ENCODE measurements at regions of chr4 and their contacts with region 1.

Region 1: DNA sequence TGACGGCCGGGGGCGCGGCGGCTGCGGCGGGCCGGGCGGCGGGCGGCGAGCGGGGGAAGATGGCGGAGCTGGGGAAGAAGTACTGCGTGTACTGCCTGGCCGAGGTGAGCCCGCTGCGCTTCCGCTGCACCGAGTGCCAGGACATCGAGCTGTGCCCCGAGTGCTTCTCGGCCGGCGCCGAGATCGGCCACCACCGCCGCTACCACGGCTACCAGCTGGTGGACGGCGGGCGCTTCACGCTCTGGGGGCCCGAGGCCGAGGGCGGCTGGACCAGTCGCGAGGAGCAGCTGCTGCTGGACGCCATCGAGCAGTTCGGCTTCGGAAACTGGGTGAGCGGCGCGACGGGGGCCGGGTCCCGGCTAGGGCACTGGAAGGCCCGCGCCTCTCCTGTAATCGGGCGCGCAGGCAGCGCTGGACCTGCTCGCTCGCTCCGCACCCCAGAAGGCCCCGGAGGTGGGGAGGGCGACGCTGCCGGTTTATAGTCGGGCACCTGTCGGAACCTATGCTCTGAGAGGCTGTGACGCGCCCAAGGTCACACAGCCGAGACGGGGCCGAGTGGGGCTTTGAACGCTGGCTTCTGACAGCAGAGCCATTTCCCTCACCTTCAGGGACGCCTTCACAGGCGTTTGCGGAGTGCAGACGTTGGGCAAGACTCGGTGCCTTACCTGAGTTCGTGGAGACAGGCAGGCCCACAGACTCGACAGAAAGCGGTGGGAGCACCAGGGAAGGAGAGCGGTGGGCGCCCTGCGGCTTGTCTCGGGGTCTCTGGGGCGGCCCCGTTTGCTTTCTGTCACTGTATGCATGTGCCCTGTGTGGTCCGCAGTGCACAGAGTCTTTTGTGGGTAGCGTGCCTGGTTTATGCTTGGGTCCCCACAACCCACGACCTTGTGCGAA is 596 bp downstream of the TADA2B start:
- DNase-seq: peak; percentile 87

Region 2: GRCh38 chr4:6885951-6886557 is 157.7 kb before region 1 on chr4:
- intact Hi-C with region 1: no loop called
- DNase-seq: peak; percentile 92

Region 3: GRCh38 chr4:7002336-7002735 is 41.4 kb before region 1 on chr4:
- intact Hi-C with region 1: loop called in 1 of 2 experiments (anchors 1 kb)
- DNase-seq: no peak

Region 4: DNA sequence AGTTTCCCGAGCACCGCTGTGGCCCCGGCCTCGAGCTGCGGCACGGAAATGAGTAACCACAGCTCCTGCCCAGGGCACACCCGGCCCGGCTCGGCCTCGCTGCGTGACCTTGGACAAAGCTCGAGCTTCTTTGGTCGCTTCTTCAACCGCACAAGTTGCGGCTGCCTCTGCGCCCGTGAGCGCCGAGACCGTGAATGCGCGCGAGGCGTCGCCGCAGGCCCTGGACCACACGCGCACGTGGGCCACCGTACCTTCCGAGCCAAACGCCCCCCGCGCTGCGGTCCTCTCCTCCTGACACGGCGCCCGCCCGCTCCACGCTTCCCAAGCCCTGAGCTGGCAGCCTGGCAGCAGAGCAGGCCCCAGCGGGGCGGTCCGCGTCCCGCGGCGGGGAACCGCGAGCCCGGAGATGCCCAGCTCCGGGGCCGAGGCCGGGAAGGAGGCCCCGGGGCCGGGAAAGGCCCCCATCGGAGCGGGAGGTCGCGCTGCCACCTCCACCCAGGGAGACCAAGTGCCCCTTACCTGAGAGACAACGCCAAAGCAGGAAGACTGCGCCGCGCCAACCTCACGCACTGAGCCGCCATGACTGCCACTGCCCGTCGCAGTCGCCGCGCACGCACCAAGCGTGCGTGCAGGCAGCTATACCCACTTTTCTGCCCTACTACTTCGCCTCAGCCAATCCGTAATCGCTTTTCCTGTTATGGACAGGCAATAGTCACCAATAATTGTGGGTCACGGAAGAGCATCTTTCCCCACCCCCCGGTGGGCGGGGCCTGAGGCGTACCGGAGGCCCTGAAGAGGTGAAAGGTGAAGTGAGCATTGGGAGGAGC is 23.9 kb after region 1 on chr4 and contains the start of gene GRPEL1:
- intact Hi-C with region 1: no loop called
- DNase-seq: peak; percentile 93
- total RNA-seq, gene GRPEL1: 22.2 to 22.6 TPM

Measured in posterior vena cava (tissue), 2 donors.